Breast epithelium (tissue), 4 donors: ENCODE measurements at regions of chr1 and their contacts with region 1.

Region 1: GRCh38 chr1:245197911-245198379 is 43.2 kb downstream of the KIF26B start:
- DNase-seq: no peak
- H3K4me3 ChIP-seq: peak overlapping the region in 1 of 3 donors; percentile 37
- H3K27ac ChIP-seq: no peak overlapping the region
- H3K4me1 ChIP-seq: no peaks in the 10 kb centered on the region
- H3K27me3 ChIP-seq: no peaks in the 10 kb centered on the region
- CTCF ChIP-seq: no peak
- POLR2A ChIP-seq: no peak

Region 2: GRCh38 chr1:245255783-245256182 is 57.8 kb after region 1 on chr1:
- intact Hi-C with region 1: loop called (anchors 2 kb)
- DNase-seq: no peak
- H3K4me3 ChIP-seq: no peak overlapping the region
- H3K27ac ChIP-seq: no peak overlapping the region
- H3K4me1 ChIP-seq: no peaks in the 10 kb centered on the region
- H3K27me3 ChIP-seq: no peaks in the 10 kb centered on the region
- CTCF ChIP-seq: no peak
- POLR2A ChIP-seq: no peak